ENCODE measurements at regions of chr9 and their contacts with region 1.

Region 1: DNA sequence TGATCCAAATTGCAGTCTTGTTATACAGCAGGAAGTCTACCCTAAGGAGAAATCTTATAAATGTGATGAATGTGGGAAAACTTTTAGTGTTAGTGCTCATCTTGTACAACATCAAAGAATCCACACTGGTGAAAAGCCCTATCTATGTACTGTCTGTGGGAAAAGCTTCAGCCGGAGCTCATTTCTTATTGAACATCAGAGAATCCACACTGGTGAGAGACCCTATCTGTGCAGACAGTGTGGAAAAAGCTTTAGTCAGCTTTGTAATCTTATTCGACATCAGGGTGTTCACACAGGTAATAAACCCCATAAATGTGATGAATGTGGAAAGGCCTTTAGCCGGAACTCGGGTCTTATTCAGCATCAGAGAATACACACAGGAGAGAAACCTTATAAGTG is 10.4 kb downstream of the ZNF189 start:
- H3K4me3 ChIP-seq: no peak overlapping the region
- H3K27ac ChIP-seq: no peak overlapping the region
- H3K4me1 ChIP-seq: no peaks in the 10 kb centered on the region
- CTCF ChIP-seq: no peak

Region 2: GRCh38 chr9:101398068-101398929 is 10.8 kb before region 1 on chr9 and contains the starts of genes MRPL50 and ZNF189:
- CTCF ChIA-PET with region 1: no interaction called
- POLR2A ChIA-PET with region 1: interaction called, 10 read pairs
- H3K4me3 ChIP-seq: peak within 1 kb of the TSS; percentile 84
- H3K27ac ChIP-seq: peak within 1 kb of the TSS; percentile 59; the same call in 1 of the 2 replicates
- H3K4me1 ChIP-seq: no peaks in the 10 kb centered on the region
- CTCF ChIP-seq: no peak

Measured in HEK293 (cell line).